ENCODE measurements at regions of chr2 and their contacts with region 1.

Region 1: DNA sequence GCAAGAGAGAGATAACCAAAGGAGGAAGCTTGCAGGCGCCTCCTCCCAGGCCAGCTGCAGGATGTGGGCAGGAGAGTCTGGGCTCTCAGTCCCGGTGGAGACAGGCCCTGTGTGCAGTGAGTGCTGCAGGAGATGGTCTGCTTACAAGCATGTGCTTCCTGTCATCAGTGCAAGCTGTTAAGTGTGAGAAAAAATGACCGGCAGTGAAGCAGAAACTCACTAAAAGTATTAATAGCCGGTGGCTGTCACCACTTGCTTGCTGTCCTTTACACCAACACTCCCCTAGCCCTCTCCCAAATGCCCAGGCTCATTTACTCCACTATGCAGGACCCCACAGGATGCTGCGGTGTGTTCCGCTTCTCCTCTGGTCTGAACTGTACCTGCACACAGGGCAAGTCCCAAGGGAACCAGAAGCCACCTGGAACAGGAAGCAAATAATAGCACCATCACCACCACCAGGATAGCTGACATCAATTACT is 435.6 kb upstream of the HS6ST1 start:
- DNase-seq: no peak
- ATAC-seq: no peak
- H3K4me3 ChIP-seq: no peak overlapping the region
- H3K27ac ChIP-seq: no peak overlapping the region
- H3K4me1 ChIP-seq: no peaks in the 10 kb centered on the region
- H3K27me3 ChIP-seq: peaks cover 2 to 47% of the 10 kb centered on the region in 2 experiments; a peak in 3 of 5 replicates
- CTCF ChIP-seq: no peak
- EP300 ChIP-seq: no peak
- POLR2A ChIP-seq: no peak
- RAD21 ChIP-seq: no peak

Region 2: GRCh38 chr2:128702616-128703015 is 51.7 kb before region 1 on chr2:
- CTCF ChIA-PET with region 1: no interaction called
- POLR2A ChIA-PET with region 1: no interaction called
- in situ Hi-C with region 1: no loop called
- intact Hi-C with region 1: no loop called
- DNase-seq: no peak
- ATAC-seq: no peak
- H3K4me3 ChIP-seq: no peak overlapping the region
- H3K27ac ChIP-seq: no peak overlapping the region
- H3K4me1 ChIP-seq: no peaks in the 10 kb centered on the region
- H3K27me3 ChIP-seq: no peaks in the 10 kb centered on the region
- CTCF ChIP-seq: no peak
- EP300 ChIP-seq: no peak
- POLR2A ChIP-seq: no peak
- RAD21 ChIP-seq: no peak

Region 3: DNA sequence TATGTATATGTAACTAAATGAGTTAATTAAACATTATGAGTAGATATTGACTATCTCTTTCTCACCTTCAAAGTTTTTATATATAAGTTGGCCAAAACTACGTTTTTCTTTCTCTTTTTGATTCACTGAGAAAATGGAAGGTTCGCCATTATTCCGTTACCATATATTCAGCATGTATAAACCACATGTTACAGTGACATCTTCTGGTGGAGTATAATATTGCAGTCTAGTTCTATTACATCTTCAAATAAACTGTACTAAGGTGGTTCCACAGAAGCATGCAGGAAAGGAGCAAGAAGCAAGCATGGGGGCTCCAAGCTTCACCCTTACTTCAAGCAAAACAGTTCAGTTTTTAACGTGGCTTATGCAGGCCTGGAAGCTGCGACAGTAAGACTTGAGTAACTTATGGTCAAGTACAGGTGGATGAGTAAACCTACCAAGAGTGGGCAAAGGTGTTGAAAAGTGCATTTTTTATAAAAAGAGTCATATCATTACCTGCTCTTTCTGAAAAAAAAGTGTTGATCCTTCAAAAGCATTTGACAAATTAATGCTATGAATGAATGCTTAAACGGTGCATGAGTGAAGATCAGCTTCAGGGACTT is 1095.4 kb after region 1 on chr2:
- CTCF ChIA-PET with region 1: no interaction called
- POLR2A ChIA-PET with region 1: no interaction called
- in situ Hi-C with region 1: loop called (anchors 25 kb)
- intact Hi-C with region 1: no loop called
- DNase-seq: peak; percentile 69
- ATAC-seq: peak; percentile 80
- H3K4me3 ChIP-seq: no peak overlapping the region
- H3K27ac ChIP-seq: no peak overlapping the region
- H3K4me1 ChIP-seq: no peaks in the 10 kb centered on the region
- H3K27me3 ChIP-seq: 0 out of 5 replicates have a peak, but pooled peaks cover 0 to 3% of the 10 kb centered on the region in 2 experiments
- CTCF ChIP-seq: peak; percentile 83
- EP300 ChIP-seq: no peak
- POLR2A ChIP-seq: no peak
- RAD21 ChIP-seq: peak; percentile 44; the same call in 1 of the 2 replicates

Measured in HepG2 (cell line).